HAP-1 (cell line): ENCODE measurements at regions of chr17 and their contacts with region 1.

Region 1: GRCh38 chr17:61389670-61390478 is 9.8 kb upstream of the TBX2 start:
- DNase-seq: peak; percentile 64 to 80
- H3K4me3 ChIP-seq: no peak overlapping the region
- H3K4me1 ChIP-seq: no peaks in the 10 kb centered on the region; the same call in 1 of the 2 replicates
- H3K27me3 ChIP-seq: no peaks in the 10 kb centered on the region

Region 2: GRCh38 chr17:60720763-60721531 is 668.9 kb before region 1 on chr17:
- in situ Hi-C with region 1: loop called (anchors 10 kb)
- DNase-seq: peak; percentile 63 to 72
- H3K4me3 ChIP-seq: no peak overlapping the region
- H3K4me1 ChIP-seq: peaks cover 4% of the 10 kb centered on the region; the same call in 1 of the 2 replicates
- H3K27me3 ChIP-seq: no peaks in the 10 kb centered on the region

Region 3: GRCh38 chr17:61002316-61002736 is 387.5 kb before region 1 on chr17:
- in situ Hi-C with region 1: loop called (anchors 5 kb)
- DNase-seq: peak in 1 of 2 experiments; percentile 54
- H3K4me3 ChIP-seq: no peak overlapping the region
- H3K4me1 ChIP-seq: peaks cover 4% of the 10 kb centered on the region
- H3K27me3 ChIP-seq: no peaks in the 10 kb centered on the region